ENCODE measurements at regions of chrX and their contacts with region 1.

Region 1: DNA sequence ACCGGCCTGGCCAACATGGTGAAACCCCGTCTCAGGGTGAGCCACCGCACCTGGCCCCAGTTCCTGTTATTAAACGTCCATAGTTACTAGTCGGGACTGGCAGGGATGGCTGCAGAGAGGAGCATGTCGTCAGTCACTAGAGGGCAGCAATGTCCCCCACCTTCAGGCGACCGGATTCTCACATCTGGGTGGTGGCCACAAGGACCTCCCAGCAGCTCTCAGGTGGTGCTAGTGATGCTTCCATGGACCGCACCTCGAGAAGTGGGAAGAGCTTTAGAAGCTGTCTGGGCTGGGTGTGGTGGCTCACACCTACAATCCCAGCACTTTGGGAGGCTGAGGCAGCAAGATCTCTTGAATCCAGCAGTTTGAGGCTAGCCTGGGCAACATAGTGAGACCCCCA is 13.3 kb upstream of the IL3RA start:
- DNase-seq: peak; percentile 82
- H3K4me3 Mint-ChIP-seq: no peak overlapping the region
- H3K27ac Mint-ChIP-seq: peak overlapping the region; percentile 9
- H3K4me1 Mint-ChIP-seq: peaks cover 15% of the 10 kb centered on the region
- H3K27me3 Mint-ChIP-seq: peaks cover 11% of the 10 kb centered on the region

Region 2: DNA sequence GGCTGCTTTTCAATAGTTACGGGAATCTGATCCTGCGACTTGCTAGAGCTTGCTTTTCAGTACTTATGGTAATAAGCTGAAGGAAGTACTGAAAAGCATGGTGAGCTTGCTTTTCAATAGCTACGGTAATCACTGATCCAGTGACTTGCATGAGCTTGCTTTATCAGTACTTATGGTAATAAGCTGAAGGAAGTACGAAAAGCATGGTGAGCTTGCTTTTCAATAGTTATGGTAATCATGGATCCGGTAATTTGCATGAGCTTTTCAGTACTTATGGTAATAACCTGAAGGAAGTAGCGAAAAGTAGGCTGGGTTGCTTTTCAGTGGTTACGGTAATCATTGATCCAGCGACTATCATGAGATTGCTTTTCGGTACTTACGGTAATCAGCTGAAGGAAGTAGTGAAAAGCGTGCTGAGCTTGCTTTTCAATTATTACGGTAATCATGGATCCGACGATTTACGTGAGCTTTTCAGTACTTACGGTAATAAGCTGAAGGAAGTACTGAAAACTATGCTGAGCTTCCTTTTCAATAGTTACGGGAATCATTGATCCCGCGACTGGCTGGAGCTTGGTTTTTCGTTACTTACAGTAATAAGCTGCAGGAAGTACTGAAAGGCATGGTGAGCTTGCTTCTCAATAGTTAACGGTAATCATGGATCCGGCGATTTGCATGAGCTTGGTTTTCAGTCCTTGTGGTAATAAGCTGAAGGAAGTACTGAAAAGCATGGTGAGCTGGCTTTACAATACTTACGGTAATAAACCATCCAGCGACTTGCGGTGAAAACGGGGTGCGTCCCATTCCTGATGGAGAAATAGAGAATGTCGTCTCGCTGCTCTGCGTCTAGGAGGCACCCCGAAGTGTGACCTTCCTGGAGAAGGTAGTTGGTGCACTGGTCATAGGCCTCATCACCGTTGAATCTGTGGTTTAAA is 117.4 kb before region 1 on chrX:
- CTCF ChIA-PET with region 1: no interaction called
- POLR2A ChIA-PET with region 1: no interaction called
- intact Hi-C with region 1: loop called (anchors 1 kb)
- DNase-seq: peak; percentile 50
- H3K4me3 Mint-ChIP-seq: peak overlapping the region; percentile 62
- H3K27ac Mint-ChIP-seq: peak overlapping the region; percentile 30
- H3K4me1 Mint-ChIP-seq: peaks cover 34% of the 10 kb centered on the region
- H3K27me3 Mint-ChIP-seq: peaks cover 3% of the 10 kb centered on the region

Region 3: DNA sequence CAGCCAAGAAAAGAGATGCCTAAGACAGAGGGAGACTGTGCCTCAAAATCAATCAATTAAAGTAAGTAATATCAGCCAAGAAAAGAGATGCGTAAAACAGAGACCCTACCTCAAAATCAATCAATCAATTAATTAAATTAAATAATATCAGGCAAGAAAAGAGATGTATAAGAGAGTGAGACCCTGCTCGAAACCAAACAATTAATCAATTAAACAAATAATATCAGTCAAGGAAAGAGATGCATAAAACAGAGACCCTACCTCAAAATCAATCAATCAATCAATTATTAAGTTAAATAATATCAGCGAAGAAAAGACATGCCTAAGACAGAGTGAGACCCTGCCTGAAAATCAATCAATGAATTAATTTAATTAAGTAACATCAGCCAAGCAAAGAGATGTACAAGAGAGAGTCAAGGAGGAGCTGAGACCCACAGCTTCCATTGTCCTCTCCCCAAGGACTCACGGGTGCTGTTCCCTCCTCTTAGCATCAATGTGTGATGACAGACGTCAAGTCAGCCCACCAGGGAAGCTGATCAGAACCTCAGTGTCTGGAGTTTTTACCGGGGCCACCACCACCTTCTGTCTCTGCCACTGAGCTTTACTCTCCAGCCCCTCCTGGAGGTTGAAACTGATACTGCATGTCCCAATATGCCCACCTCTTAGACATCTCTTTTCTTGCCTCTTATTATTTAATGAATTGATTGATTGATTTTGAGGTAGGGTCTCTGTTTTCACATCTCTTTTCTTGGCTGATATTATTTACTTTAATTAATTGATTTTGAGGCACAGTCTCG is 257.6 kb after region 1 on chrX:
- CTCF ChIA-PET with region 1: no interaction called
- POLR2A ChIA-PET with region 1: no interaction called
- intact Hi-C with region 1: loop called (anchors 5 kb)
- DNase-seq: peak; percentile 88
- H3K4me3 Mint-ChIP-seq: peak overlapping the region; percentile 50
- H3K27ac Mint-ChIP-seq: peak overlapping the region; percentile 38
- H3K4me1 Mint-ChIP-seq: peaks cover 27% of the 10 kb centered on the region
- H3K27me3 Mint-ChIP-seq: no peaks in the 10 kb centered on the region